Psoas muscle (tissue), 8 donors: ENCODE measurements at regions of chr3 and their contacts with region 1.

Region 1: GRCh38 chr3:135503760-135504686 is 461.5 kb upstream of the PPP2R3A start:
- DNase-seq: peak; percentile 56 to 88
- ATAC-seq: peak; percentile 73 to 98 (median 86)
- H3K4me3 ChIP-seq: no peak overlapping the region
- H3K27ac ChIP-seq: no peak overlapping the region
- H3K4me1 ChIP-seq: no peaks in the 10 kb centered on the region
- H3K27me3 ChIP-seq: no peaks in the 10 kb centered on the region
- CTCF ChIP-seq: peak; percentile 75

Region 2: DNA sequence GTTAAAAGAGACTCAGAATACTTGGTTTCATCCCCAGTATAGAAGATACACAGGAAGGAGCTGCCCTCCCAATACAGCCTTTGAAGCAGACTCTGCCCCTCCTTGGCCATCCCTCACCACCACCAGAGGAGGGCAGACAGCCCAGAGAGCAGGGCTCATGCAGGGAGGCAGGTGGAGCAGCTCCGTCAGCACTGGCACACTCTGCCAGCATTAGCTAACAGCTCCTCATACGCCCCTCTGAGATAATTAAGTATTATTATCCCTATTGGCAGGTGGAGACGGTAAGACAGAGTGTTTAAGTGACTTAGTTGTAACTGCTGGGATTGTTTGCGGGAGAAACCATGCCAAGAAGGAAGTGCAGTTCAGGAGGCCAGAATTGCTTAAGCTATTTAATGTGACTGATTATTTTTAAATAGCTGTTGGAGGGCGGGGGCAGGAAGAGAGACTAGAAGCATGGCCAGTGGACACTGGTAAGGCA is 275.0 kb before region 1 on chr3:
- intact Hi-C with region 1: loop called (anchors 10 kb)
- DNase-seq: peak; percentile 70 to 94
- ATAC-seq: peak; percentile 97 to 98 (median 98)
- H3K4me3 ChIP-seq: no peak overlapping the region
- H3K27ac ChIP-seq: peak overlapping the region; percentile 77
- H3K4me1 ChIP-seq: peaks cover 10% of the 10 kb centered on the region
- H3K27me3 ChIP-seq: no peaks in the 10 kb centered on the region
- CTCF ChIP-seq: peak; percentile 59

Region 3: DNA sequence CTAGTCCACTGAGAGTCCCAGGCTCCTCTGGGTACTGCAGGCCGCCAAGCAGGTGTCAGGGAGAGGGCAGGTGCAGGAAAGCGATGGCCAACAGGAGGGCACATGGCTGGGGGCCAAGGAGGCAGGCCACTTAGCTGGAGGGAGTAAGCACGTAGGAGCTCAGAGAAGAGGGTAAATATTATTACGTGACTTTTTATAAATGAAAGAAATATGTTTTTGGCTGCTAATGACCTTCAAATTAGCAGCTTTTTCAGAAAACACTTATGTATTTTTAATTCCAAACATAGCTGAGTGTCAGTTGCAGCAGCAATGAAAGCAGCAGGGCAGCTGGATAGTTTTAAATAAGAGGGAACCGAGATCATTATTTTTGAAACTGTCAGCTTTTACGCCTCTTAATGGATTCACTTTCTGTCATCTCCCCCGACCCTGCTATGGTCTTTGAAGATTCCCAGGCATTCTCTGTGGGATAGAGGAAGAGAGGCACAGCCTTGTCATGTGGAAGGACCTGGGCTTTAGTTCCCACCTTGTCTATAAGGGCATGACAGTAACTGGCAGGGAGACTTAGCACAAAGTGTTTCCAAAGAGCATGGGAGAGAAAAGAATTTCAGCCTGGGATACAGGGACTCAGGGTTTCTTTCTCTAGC is 231.9 kb before region 1 on chr3:
- intact Hi-C with region 1: no loop called
- DNase-seq: peak in 1 of 2 donors; percentile 52
- ATAC-seq: peak in 3 of 4 donors; percentile 25 to 60 (median 57)
- H3K4me3 ChIP-seq: no peak overlapping the region
- H3K27ac ChIP-seq: no peak overlapping the region
- H3K4me1 ChIP-seq: peaks cover 10% of the 10 kb centered on the region
- H3K27me3 ChIP-seq: no peaks in the 10 kb centered on the region
- CTCF ChIP-seq: no peak

Region 4: DNA sequence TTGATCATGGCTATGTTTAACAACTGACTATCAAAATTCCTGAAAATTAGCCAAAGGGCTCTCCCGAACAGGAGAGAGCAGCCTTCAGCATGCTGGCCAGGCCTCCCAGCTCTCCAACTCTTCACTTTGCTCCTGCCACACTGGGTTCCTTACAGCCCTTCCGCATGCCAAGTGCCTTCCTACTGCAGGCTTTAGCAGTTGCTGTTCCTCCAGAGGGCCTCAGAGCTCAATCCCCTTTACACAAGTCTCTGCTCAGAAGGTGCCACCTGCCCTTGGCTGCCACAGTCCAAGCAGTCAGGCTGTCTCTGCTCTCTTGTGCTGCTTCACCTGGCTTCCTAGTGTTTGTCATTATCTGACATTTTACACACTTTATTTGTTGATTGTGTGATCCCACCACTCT is 91.5 kb before region 1 on chr3:
- intact Hi-C with region 1: loop called in 1 of 2 experiments (anchors 10 kb)
- DNase-seq: no peak
- ATAC-seq: no peak
- H3K4me3 ChIP-seq: no peak overlapping the region
- H3K27ac ChIP-seq: no peak overlapping the region
- H3K4me1 ChIP-seq: no peaks in the 10 kb centered on the region
- H3K27me3 ChIP-seq: no peaks in the 10 kb centered on the region
- CTCF ChIP-seq: no peak